Right lobe of liver (tissue), 6 donors: ENCODE measurements at regions of chr17 and their contacts with region 1.

Region 1: DNA sequence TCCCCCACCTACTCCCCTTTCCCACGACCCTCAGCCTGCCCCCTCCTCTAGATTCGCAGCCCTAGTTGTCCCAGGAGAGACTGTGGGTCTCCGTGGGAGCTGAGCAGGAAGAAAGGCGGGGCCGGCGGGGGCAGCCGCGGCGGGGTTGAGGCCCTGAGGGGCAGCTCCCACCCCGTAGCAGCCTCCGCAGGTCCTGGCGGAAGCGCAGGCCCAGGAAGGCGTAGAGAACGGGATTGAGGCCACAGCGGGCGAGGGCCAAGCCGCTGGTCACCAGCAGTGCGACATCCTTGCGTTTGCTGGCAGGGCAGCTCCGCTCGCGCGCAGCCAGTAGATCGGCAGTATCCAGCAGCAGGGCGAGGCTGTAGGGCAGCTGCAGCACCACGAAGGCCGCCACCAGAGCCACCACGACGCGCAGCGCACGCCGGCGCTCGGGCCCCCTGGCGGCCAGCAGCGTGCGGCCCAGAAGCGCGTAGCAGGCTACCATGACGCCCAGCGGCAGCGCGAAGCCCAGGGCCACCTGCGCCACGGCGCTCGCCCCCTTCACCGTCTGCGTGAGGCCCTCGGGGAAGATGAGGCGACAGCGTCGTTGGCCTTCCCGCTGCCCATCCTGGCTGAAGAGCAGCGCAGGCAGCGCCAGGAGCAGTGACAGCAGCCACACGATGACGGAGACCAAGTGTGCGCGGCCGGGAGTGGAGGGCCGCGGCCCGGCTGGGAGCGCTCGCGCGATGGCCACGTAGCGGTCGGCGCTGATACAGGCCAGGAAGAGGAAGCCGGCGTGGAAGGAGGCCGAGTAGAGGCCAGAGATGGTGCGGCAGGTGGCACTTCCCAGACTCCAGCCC is 1.9 kb downstream of the CCR10 start:
- DNase-seq: peak; percentile 85 to 87 (median 86)
- ATAC-seq: peak; percentile 46 to 61 (median 54)
- H3K4me3 ChIP-seq: peak overlapping the region; percentile 14 to 45 (median 32)
- H3K27ac ChIP-seq: peak overlapping the region; percentile 85 to 90 (median 87)
- H3K4me1 ChIP-seq: peaks cover 0 to 45% (median 7%) of the 10 kb centered on the region in 4 donors
- H3K27me3 ChIP-seq: peaks cover 0 to 5% of the 10 kb centered on the region in 2 donors
- CTCF ChIP-seq: peak; percentile 90 to 96 (median 94)
- POLR2A ChIP-seq: no peak

Region 2: GRCh38 chr17:42586514-42587230 is 93.0 kb before region 1 on chr17:
- intact Hi-C with region 1: loop called in 1 of 2 experiments (anchors 10 kb)
- DNase-seq: no peak
- ATAC-seq: no peak
- H3K4me3 ChIP-seq: no peak overlapping the region
- H3K27ac ChIP-seq: no peak overlapping the region
- H3K4me1 ChIP-seq: no peaks in the 10 kb centered on the region
- H3K27me3 ChIP-seq: no peaks in the 10 kb centered on the region
- CTCF ChIP-seq: no peak
- POLR2A ChIP-seq: no peak

Region 3: GRCh38 chr17:42618442-42619150 is 61.1 kb before region 1 on chr17:
- intact Hi-C with region 1: loop called (anchors 10 kb)
- DNase-seq: peak; percentile 51 to 78 (median 61)
- ATAC-seq: peak; percentile 92 to 97 (median 97)
- H3K4me3 ChIP-seq: no peak overlapping the region
- H3K27ac ChIP-seq: no peak overlapping the region
- H3K4me1 ChIP-seq: peaks cover 0 to 9% (median 0%) of the 10 kb centered on the region in 4 donors
- H3K27me3 ChIP-seq: no peaks in the 10 kb centered on the region
- CTCF ChIP-seq: peak; percentile 42 to 56 (median 50)
- POLR2A ChIP-seq: no peak

Region 4: DNA sequence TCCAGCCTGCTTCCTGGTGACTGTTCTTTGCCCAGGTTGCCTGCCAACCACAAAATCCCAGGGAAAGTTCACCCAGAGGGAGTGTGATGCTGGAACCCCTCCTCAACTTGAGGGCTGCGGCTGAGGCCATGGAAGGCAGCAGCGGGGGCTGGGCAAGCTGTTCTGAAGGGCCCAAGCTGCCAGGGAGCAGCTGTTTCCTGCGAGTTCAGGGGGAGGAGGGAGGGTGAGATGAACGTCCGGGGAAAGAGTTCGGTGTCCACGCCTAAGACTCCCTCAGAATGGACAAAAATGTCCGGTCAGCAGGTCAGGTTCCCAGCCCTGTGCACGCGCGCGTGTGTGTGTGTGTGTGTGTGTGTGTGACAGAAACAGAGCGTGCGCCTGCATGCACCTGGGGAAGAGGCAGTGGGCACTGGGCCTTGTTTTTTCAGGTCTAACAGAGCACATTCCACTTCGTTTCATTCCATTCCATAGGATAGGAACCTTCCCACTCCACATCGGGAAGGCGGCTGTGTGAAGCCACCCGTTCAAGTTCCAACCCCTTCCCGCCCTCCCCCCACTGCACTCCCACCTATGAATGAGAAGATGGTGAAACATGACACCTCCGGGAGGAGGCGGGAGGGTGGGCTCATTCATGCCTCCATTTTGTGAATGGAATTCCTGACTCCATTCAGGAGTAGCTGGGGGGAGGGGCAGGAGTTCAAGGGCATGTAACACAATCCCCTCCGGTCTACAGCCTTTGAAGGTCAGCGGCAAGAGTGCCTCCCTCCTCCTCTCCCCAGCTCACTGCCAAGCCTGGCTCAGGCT is 850.8 kb after region 1 on chr17:
- intact Hi-C with region 1: no loop called
- DNase-seq: peak in 2 of 3 donors; percentile 29 to 52
- ATAC-seq: peak; percentile 44 to 66 (median 52)
- H3K4me3 ChIP-seq: no peak overlapping the region
- H3K27ac ChIP-seq: no peak overlapping the region
- H3K4me1 ChIP-seq: peaks cover 0 to 16% (median 0%) of the 10 kb centered on the region in 4 donors
- H3K27me3 ChIP-seq: no peaks in the 10 kb centered on the region
- CTCF ChIP-seq: no peak
- POLR2A ChIP-seq: no peak